ENCODE measurements at regions of chr12 and their contacts with region 1.

Region 1: GRCh38 chr12:123200414-123200813 is 32.5 kb downstream of the MPHOSPH9 start:
- DNase-seq: no peak
- ATAC-seq: no peak
- H3K4me3 ChIP-seq: no peak overlapping the region
- H3K27ac ChIP-seq: no peak overlapping the region
- H3K4me1 ChIP-seq: no peaks in the 10 kb centered on the region
- H3K27me3 ChIP-seq: no peaks in the 10 kb centered on the region
- CTCF ChIP-seq: no peak
- POLR2A ChIP-seq: no peak
- RAD21 ChIP-seq: no peak

Region 2: GRCh38 chr12:122593910-122594309 is 606.5 kb before region 1 on chr12:
- CTCF ChIA-PET with region 1: no interaction called
- POLR2A ChIA-PET with region 1: no interaction called
- dilution Hi-C with region 1: no loop called
- in situ Hi-C with region 1: loop called (anchors 25 kb)
- intact Hi-C with region 1: no loop called
- DNase-seq: no peak
- ATAC-seq: no peak
- H3K4me3 ChIP-seq: no peak overlapping the region
- H3K27ac ChIP-seq: no peak overlapping the region
- H3K4me1 ChIP-seq: no peaks in the 10 kb centered on the region
- H3K27me3 ChIP-seq: no peaks in the 10 kb centered on the region
- CTCF ChIP-seq: no peak
- POLR2A ChIP-seq: no peak
- RAD21 ChIP-seq: no peak

Region 3: DNA sequence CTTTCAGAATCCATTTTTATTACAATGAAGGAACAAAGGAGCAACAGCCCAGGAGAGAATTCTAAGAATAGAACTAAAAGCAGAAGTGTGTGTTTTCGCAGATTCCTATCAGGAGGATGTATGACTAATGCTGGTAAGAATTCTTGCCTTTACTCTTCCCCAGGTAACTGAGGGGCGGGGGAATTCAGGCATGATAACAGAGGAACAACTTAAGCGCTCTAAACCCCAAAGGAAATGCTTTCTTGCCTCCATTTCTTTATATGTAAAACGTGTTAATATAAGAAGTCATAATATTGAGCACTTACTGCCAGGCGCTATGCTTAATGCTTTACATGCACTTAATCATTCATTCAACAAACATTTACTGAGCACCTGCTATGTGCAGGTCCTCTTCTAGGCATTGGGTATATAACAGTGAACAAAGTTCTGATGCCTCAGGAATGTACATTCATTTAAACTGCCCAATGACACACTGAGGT is 474.3 kb before region 1 on chr12:
- CTCF ChIA-PET with region 1: no interaction called
- POLR2A ChIA-PET with region 1: no interaction called
- dilution Hi-C with region 1: no loop called
- in situ Hi-C with region 1: no loop called
- intact Hi-C with region 1: no loop called
- DNase-seq: no peak
- ATAC-seq: no peak
- H3K4me3 ChIP-seq: no peak overlapping the region
- H3K27ac ChIP-seq: no peak overlapping the region
- H3K4me1 ChIP-seq: no peaks in the 10 kb centered on the region
- H3K27me3 ChIP-seq: peaks cover 29% of the 10 kb centered on the region
- CTCF ChIP-seq: no peak
- POLR2A ChIP-seq: no peak
- RAD21 ChIP-seq: no peak

Region 4: GRCh38 chr12:122974274-122974891 is 226.0 kb before region 1 on chr12:
- CTCF ChIA-PET with region 1: no interaction called
- POLR2A ChIA-PET with region 1: no interaction called
- dilution Hi-C with region 1: no loop called
- in situ Hi-C with region 1: no loop called
- intact Hi-C with region 1: no loop called
- DNase-seq: peak; percentile 98
- ATAC-seq: peak; percentile 87
- H3K4me3 ChIP-seq: peak overlapping the region; percentile 92
- H3K27ac ChIP-seq: peak overlapping the region; percentile 89
- H3K4me1 ChIP-seq: peaks cover 8% of the 10 kb centered on the region; the same call in 1 of the 2 replicates
- H3K27me3 ChIP-seq: no peaks in the 10 kb centered on the region
- CTCF ChIP-seq: no peak
- POLR2A ChIP-seq: no peak
- RAD21 ChIP-seq: no peak

Region 5: DNA sequence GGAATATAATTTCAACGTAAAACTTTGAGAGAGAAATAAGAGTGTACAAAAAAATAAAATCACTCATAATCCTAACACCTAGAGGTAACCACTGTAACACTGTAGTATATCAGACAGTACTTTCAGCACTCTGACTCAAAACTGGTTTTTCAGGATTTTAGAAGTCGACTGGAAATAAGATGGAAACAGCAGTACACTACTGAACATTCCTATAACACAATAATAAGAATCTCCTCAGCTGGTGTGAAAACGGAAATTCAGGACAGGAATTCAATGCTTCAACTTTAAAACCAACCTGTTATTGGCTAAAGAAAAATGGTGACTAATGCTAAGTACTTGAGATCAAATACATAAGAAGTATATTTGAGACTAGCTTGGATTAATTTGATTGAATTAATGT is 37.2 kb before region 1 on chr12:
- CTCF ChIA-PET with region 1: no interaction called
- POLR2A ChIA-PET with region 1: interaction called, 3 read pairs
- dilution Hi-C with region 1: no loop called
- in situ Hi-C with region 1: no loop called
- intact Hi-C with region 1: loop called (anchors 5 kb)
- DNase-seq: no peak
- ATAC-seq: no peak
- H3K4me3 ChIP-seq: no peak overlapping the region
- H3K27ac ChIP-seq: no peak overlapping the region
- H3K4me1 ChIP-seq: no peaks in the 10 kb centered on the region
- H3K27me3 ChIP-seq: no peaks in the 10 kb centered on the region
- CTCF ChIP-seq: no peak
- POLR2A ChIP-seq: no peak
- RAD21 ChIP-seq: no peak

Region 6: DNA sequence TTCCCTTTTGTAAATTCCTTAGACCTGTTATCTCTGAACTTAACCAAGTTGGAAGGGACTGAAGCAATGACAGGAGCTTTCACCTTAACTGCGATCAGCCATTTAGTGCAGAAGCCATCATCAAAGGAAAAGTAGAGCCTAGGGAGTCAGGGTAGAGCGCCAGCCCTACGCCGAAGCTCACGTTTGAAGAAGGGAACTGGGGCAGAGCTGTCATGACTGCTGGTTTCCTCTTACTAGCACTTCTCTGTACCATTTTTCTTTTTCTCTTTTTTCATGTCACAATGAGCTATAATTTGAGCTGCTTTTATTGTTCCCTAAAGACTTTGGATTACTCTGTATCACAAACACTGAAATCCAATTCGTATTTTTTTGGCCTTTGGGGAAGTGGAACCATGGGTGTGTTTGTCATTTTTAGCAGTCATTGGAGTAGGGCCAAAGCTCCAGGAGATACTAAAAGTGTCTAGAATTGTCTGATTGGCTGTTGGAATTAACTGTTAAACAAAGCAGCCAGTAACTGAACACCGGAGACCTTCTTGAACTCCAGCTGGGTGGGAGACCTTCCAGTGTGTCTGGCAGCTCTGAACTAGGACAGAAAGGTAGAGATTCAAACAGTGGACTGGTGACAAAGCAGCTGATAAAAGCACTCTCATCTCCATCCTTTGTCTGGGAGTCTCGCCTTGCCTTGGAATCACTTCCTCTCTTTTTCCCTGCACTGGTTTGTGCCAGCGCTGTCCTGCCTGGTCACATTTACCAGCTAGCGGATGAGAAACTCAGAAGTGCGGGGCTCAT is 41.9 kb after region 1 on chr12:
- CTCF ChIA-PET with region 1: no interaction called
- POLR2A ChIA-PET with region 1: no interaction called
- dilution Hi-C with region 1: no loop called
- in situ Hi-C with region 1: no loop called
- intact Hi-C with region 1: no loop called
- DNase-seq: peak; percentile 10
- ATAC-seq: peak; percentile 56
- H3K4me3 ChIP-seq: no peak overlapping the region
- H3K27ac ChIP-seq: no peak overlapping the region; the same call in 1 of the 2 replicates
- H3K4me1 ChIP-seq: peaks cover 3% of the 10 kb centered on the region
- H3K27me3 ChIP-seq: no peaks in the 10 kb centered on the region
- CTCF ChIP-seq: no peak
- POLR2A ChIP-seq: no peak
- RAD21 ChIP-seq: no peak